ENCODE measurements at regions of chr20 and their contacts with region 1.

Region 1: GRCh38 chr20:54680872-54681619 is 205.7 kb downstream of the DOK5 start:
- ATAC-seq: peak in 3 of 8 experiments; percentile 38 to 64 (median 45)
- H3K4me3 ChIP-seq: no peak overlapping the region
- H3K27ac ChIP-seq: no peak overlapping the region
- H3K4me1 ChIP-seq: peaks cover 0 to 14% of the 10 kb centered on the region in 2 donors

Region 2: DNA sequence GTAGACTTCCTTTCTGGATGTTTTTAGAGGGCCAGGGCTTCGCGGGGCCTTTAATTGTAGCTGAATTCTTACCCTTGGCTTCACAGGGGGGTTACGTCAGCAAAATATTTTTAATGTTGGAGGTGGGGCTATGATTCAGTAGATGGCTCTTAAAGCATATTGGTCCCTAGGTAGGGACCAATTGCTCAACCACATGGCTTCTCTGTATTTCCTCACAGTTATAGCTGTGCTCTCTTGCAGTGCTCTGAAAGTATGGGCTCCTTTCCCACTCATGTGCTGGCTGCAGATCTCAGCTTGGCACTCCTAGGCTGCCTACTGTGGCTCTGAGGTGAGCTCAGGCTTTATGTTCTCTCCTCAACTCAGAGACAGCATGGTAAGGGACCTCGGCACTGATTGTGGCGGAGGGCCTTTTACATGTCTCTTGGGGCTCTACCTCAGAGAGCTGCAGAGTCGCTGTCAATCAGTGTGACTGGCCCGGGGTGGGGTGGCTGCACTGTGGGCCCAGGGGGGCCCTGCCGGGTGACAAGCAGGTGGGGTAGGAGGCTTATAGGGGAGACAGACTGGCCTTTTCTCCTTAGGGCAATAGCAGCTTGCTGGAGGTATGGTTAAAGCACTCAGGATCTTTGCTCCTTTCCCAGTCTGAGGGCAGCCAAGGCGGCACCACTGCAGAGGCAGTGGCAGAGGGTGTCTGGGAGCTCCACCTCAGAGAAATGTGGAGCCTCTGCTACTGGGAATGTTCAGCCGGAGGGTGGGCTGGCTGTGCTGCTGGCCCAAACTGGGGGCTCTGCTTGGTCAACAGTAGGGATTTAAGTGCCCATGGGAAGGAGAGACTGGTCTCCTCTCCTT is 112.5 kb after region 1 on chr20:
- in situ Hi-C with region 1: loop called in 1 of 9 experiments (anchors 25 kb)
- ATAC-seq: no peak
- H3K4me3 ChIP-seq: no peak overlapping the region
- H3K27ac ChIP-seq: no peak overlapping the region
- H3K4me1 ChIP-seq: no peaks in the 10 kb centered on the region

Region 3: GRCh38 chr20:54887163-54887562 is 206.1 kb after region 1 on chr20:
- in situ Hi-C with region 1: no loop called
- ATAC-seq: no peak
- H3K4me3 ChIP-seq: no peak overlapping the region
- H3K27ac ChIP-seq: no peak overlapping the region
- H3K4me1 ChIP-seq: no peaks in the 10 kb centered on the region

Region 4: DNA sequence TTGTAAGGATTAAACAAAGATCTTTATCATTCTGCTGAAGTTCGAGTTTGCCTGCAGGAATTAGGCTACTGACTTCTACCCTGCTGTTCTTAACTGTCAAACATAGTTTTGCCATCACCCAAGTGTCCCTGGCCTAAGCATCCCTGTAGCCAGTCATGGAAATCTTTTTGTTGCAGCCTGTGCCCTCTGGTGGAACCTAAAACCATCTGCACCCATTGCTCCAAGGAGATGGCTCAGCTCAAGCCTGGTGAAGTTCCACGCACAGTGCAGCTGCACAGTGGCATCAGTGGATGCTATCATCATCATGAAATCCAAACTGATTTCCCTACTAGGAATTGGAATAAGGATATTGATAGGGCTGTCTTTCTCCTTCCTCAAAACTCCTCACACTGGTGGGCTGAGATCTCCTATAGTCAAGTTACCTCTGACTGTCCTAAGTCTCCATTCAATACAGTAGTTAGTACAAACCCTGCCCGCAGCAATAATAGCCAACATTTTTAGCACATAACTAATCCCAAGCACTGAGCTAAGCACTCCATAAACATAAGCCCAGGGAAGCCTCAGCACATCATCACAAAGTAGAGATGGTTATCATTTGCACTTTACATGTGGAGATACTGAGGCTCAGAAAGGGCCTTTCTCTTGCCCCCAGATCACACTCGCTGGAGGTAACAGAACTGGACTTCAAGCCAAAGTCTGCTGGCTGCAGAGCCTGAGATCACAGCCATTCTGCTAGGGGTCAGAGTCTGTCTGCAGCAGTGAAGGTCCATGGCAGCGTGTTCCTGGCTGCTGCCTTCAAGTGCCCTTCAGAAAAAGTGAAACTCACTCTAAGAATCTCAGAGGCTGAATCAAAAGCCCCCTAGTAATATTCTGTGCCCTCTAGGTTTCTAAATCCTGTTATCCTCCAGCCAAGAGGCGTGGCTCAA is 1490.3 kb after region 1 on chr20:
- in situ Hi-C with region 1: loop called in 1 of 9 experiments (anchors 25 kb)
- ATAC-seq: peak in 5 of 8 experiments; percentile 48 to 76 (median 70)
- H3K4me3 ChIP-seq: no peak overlapping the region
- H3K27ac ChIP-seq: no peak overlapping the region
- H3K4me1 ChIP-seq: no peaks in the 10 kb centered on the region

Measured in motor neuron (in vitro differentiated cells).